ENCODE measurements at regions of chr2 and their contacts with region 1.

Region 1: GRCh38 chr2:203453858-203454451 is 81.1 kb downstream of the RAPH1 start:
- DNase-seq: no peak
- ATAC-seq: peak; percentile 53 to 93 (median 75)
- H3K4me3 ChIP-seq: no peak overlapping the region
- H3K27ac ChIP-seq: no peak overlapping the region
- H3K4me1 ChIP-seq: no peaks in the 10 kb centered on the region
- H3K27me3 ChIP-seq: no peaks in the 10 kb centered on the region
- CTCF ChIP-seq: peak; percentile 72

Region 2: DNA sequence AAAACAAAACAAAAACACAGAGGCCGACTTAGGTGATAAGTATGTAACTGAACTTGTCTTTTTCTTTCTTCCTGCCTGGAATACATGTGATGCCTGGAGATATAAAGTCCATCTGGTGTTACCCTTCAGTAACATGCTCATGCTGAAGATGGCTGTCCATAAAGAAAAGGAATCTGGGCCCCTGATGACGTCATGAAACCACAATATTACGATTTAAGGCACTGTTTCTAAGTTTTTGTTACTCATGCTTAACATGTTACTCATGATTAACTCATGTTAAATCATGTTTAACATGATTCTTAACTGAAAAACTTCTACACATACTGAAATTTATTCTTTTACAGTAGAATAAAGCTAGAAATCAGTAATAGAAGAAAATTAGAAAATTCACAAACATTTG is 1953.4 kb before region 1 on chr2:
- intact Hi-C with region 1: loop called in 1 of 2 experiments (anchors 5 kb)
- DNase-seq: no peak
- ATAC-seq: no peak
- H3K4me3 ChIP-seq: no peak overlapping the region
- H3K27ac ChIP-seq: no peak overlapping the region
- H3K4me1 ChIP-seq: no peaks in the 10 kb centered on the region
- H3K27me3 ChIP-seq: no peaks in the 10 kb centered on the region
- CTCF ChIP-seq: no peak

Region 3: GRCh38 chr2:203238704-203239526 is 215.0 kb before region 1 on chr2 and contains the start of gene CYP20A1:
- intact Hi-C with region 1: loop called in 1 of 2 experiments (anchors 10 kb)
- DNase-seq: peak; percentile 97 to 98
- ATAC-seq: peak; percentile 97 to 98 (median 98)
- H3K4me3 ChIP-seq: peak within 1 kb of the TSS; percentile 79
- H3K27ac ChIP-seq: peak within 1 kb of the TSS; percentile 95
- H3K4me1 ChIP-seq: peaks cover 16% of the 10 kb centered on the region
- H3K27me3 ChIP-seq: no peaks in the 10 kb centered on the region
- CTCF ChIP-seq: peak; percentile 29
- total RNA-seq, gene CYP20A1: 8.7 to 10.9 (median 9.5) TPM

Measured in psoas muscle (tissue), 8 donors.